Activated T-helper 2 cell treated with anti-CD3 and anti-CD28 coated beads, Interferon-gamma antibody, Interleukin-2, Interleukin-4, amounts not matched to agents 10 μg/mL and 5 μg/mL and 100 μg/mL, durations not matched to agents 14 hours and 24 hours and 36 hours (primary cell): ENCODE measurements at regions of chr13 and their contacts with region 1.

Region 1: GRCh38 chr13:48233046-48233907 is at the start of gene ITM2B:
- DNase-seq: peak; percentile 50
- H3K4me3 Mint-ChIP-seq: peak within 1 kb of the TSS; percentile 87
- H3K27ac Mint-ChIP-seq: peak within 1 kb of the TSS; percentile 73
- H3K4me1 Mint-ChIP-seq: peaks cover 38% of the 10 kb centered on the region
- H3K27me3 Mint-ChIP-seq: peaks cover 44% of the 10 kb centered on the region
- total RNA-seq, gene ITM2B: 48.7 and 54.4 TPM in 2 replicates

Region 2: GRCh38 chr13:48126944-48127830 is 106.1 kb before region 1 on chr13:
- intact Hi-C with region 1: loop called (anchors 1 kb)
- DNase-seq: peak; percentile 14
- H3K4me3 Mint-ChIP-seq: no peak overlapping the region
- H3K27ac Mint-ChIP-seq: no peak overlapping the region
- H3K4me1 Mint-ChIP-seq: peaks cover 9% of the 10 kb centered on the region
- H3K27me3 Mint-ChIP-seq: peaks cover 10% of the 10 kb centered on the region

Region 3: GRCh38 chr13:48210178-48210577 is 23.1 kb before region 1 on chr13:
- intact Hi-C with region 1: loop called (anchors 1 kb)
- DNase-seq: no peak
- H3K4me3 Mint-ChIP-seq: no peak overlapping the region
- H3K27ac Mint-ChIP-seq: no peak overlapping the region
- H3K4me1 Mint-ChIP-seq: no peaks in the 10 kb centered on the region
- H3K27me3 Mint-ChIP-seq: peaks cover 41% of the 10 kb centered on the region

Region 4: DNA sequence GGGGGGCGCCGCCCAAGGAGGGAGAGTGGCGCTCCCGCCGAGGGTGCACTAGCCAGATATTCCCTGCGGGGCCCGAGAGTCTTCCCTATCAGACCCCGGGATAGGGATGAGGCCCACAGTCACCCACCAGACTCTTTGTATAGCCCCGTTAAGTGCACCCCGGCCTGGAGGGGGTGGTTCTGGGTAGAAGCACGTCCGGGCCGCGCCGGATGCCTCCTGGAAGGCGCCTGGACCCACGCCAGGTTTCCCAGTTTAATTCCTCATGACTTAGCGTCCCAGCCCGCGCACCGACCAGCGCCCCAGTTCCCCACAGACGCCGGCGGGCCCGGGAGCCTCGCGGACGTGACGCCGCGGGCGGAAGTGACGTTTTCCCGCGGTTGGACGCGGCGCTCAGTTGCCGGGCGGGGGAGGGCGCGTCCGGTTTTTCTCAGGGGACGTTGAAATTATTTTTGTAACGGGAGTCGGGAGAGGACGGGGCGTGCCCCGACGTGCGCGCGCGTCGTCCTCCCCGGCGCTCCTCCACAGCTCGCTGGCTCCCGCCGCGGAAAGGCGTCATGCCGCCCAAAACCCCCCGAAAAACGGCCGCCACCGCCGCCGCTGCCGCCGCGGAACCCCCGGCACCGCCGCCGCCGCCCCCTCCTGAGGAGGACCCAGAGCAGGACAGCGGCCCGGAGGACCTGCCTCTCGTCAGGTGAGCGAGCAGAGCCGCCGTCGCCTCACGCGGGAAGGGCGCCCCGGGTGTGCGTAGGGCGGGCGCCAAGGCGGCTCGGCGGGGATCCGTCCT is 70.3 kb after region 1 on chr13 and contains the start of gene RB1:
- intact Hi-C with region 1: loop called (anchors 2 kb)
- DNase-seq: peak; percentile 89
- H3K4me3 Mint-ChIP-seq: peak within 1 kb of the TSS; percentile 99
- H3K27ac Mint-ChIP-seq: peak within 1 kb of the TSS; percentile 97
- H3K4me1 Mint-ChIP-seq: peaks cover 27% of the 10 kb centered on the region
- H3K27me3 Mint-ChIP-seq: no peaks in the 10 kb centered on the region
- total RNA-seq, gene RB1: 27.1 and 28.0 TPM in 2 replicates

Region 5: DNA sequence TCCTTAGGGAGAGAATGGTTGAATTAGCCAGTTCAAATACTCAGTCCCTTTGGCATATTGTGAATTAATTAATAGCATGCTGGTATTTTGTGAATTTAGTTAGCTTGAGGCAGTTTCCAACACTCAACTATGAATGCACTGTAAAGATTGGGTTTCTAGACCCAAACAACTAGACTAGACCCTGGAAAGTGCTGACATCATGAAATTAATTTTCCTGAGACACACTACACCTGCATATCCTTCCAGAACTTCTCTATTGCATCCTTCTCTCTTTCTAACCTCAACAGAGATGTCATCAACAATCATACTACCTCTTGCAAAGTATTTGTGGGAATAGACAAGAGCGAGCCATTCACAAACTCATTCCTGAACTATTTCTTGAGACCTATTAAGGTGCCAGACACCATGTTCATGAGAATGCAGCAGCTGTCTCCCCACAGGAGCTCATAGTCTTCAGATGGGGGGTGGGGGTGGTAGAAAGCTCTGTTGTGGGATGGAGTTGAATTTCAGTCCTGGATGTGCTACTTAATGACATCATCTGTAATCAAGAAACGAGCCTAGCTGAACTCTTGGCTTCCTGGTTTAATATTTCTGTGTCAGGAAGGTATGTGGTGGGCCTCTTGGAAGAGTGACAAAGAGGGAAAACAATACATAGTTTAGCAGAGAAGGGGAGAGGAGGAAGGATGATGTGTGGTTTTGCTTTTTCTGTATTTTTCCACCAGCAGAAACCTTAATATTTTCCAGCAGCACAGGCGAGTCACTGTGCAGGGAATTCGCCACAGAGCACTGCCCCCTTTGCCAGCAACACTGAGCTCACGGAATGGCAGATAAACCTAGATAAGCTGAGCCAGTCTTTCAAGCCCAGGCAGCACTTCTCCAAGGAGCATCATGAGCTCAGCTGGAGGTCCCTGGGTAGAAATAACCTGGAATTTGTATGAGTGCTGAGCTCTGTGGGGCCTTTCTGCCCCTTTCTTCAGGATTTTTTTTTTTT is 367.4 kb after region 1 on chr13:
- intact Hi-C with region 1: no loop called
- DNase-seq: no peak
- H3K4me3 Mint-ChIP-seq: no peak overlapping the region
- H3K27ac Mint-ChIP-seq: no peak overlapping the region
- H3K4me1 Mint-ChIP-seq: peaks cover 7% of the 10 kb centered on the region
- H3K27me3 Mint-ChIP-seq: peaks cover 9% of the 10 kb centered on the region